ENCODE measurements at regions of chr14 and their contacts with region 1.

Region 1: GRCh38 chr14:91996948-91997371 is 42.9 kb downstream of the TRIP11 start:
- DNase-seq: peak; percentile 48
- ATAC-seq: peak; percentile 53; the same call in 2 of the 3 replicates
- H3K4me3 ChIP-seq: no peak overlapping the region
- H3K27ac ChIP-seq: no peak overlapping the region
- H3K4me1 ChIP-seq: no peaks in the 10 kb centered on the region
- H3K27me3 ChIP-seq: no peaks in the 10 kb centered on the region
- CTCF ChIP-seq: peak; percentile 66
- EP300 ChIP-seq: no peak
- POLR2A ChIP-seq: no peak
- RAD21 ChIP-seq: no peak

Region 2: GRCh38 chr14:91568626-91569025 is 428.3 kb before region 1 on chr14:
- CTCF ChIA-PET with region 1: no interaction called
- POLR2A ChIA-PET with region 1: no interaction called
- in situ Hi-C with region 1: no loop called
- intact Hi-C with region 1: no loop called
- DNase-seq: peak; percentile 55
- ATAC-seq: peak; percentile 100
- H3K4me3 ChIP-seq: no peak overlapping the region
- H3K27ac ChIP-seq: no peak overlapping the region
- H3K4me1 ChIP-seq: no peaks in the 10 kb centered on the region
- H3K27me3 ChIP-seq: peaks cover 0 to 6% of the 10 kb centered on the region in 2 experiments; a peak in 3 of 5 replicates
- CTCF ChIP-seq: peak; percentile 88
- EP300 ChIP-seq: no peak
- POLR2A ChIP-seq: no peak
- RAD21 ChIP-seq: peak; percentile 77

Region 3: DNA sequence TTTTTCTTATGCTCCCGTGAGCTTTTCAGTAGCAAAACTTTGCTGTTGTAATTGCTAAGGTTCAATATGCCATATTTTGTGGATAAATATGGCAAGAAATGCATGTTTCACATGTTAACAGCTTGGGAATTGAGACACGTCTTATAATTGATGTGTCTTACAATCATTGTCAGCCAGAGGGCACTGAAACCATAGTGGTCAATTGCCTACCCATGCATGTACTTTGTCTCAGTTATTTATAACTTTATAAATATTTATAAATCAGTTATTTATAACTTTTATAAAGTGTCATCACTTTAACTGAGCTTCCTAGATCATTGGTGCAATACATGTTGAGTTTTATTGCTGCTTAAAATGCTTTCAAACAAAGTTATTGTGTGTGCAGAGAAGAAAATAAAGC is 347.0 kb before region 1 on chr14:
- CTCF ChIA-PET with region 1: interaction called, 4 read pairs
- POLR2A ChIA-PET with region 1: no interaction called
- in situ Hi-C with region 1: no loop called
- intact Hi-C with region 1: loop called (anchors 5 kb)
- DNase-seq: peak; percentile 13
- ATAC-seq: no peak
- H3K4me3 ChIP-seq: no peak overlapping the region
- H3K27ac ChIP-seq: no peak overlapping the region
- H3K4me1 ChIP-seq: no peaks in the 10 kb centered on the region
- H3K27me3 ChIP-seq: no peaks in the 10 kb centered on the region
- CTCF ChIP-seq: peak; percentile 54
- EP300 ChIP-seq: no peak
- POLR2A ChIP-seq: no peak
- RAD21 ChIP-seq: no peak

Region 4: GRCh38 chr14:91947471-91948184 is 49.3 kb before region 1 on chr14 and contains the start of gene FBLN5:
- CTCF ChIA-PET with region 1: no interaction called
- POLR2A ChIA-PET with region 1: no interaction called
- in situ Hi-C with region 1: no loop called
- intact Hi-C with region 1: loop called (anchors 5 kb)
- DNase-seq: no peak
- ATAC-seq: peak; percentile 72
- H3K4me3 ChIP-seq: peak within 1 kb of the TSS; percentile 54 to 68 (median 65)
- H3K27ac ChIP-seq: no peak within 1 kb of the TSS
- H3K4me1 ChIP-seq: peaks cover 35% of the 10 kb centered on the region
- H3K27me3 ChIP-seq: peaks cover 5 to 29% of the 10 kb centered on the region in 2 experiments
- CTCF ChIP-seq: no peak
- EP300 ChIP-seq: no peak
- POLR2A ChIP-seq: no peak
- RAD21 ChIP-seq: no peak
- total RNA-seq, gene FBLN5: 0.60 and 0.77 TPM in 2 replicates

Region 5: GRCh38 chr14:92014040-92014439 is 17.1 kb after region 1 on chr14:
- CTCF ChIA-PET with region 1: no interaction called
- POLR2A ChIA-PET with region 1: no interaction called
- in situ Hi-C with region 1: no loop called
- intact Hi-C with region 1: no loop called
- DNase-seq: no peak
- ATAC-seq: no peak
- H3K4me3 ChIP-seq: no peak overlapping the region
- H3K27ac ChIP-seq: no peak overlapping the region
- H3K4me1 ChIP-seq: no peaks in the 10 kb centered on the region
- H3K27me3 ChIP-seq: no peaks in the 10 kb centered on the region
- CTCF ChIP-seq: no peak
- EP300 ChIP-seq: no peak
- POLR2A ChIP-seq: no peak
- RAD21 ChIP-seq: no peak

Measured in HepG2 (cell line).